SK-N-SH (cell line): ENCODE measurements at regions of chr19 and their contacts with region 1.

Region 1: GRCh38 chr19:46392243-46392801 is 21.0 kb downstream of the CCDC8 start:
- DNase-seq: no peak
- H3K4me3 ChIP-seq: no peak overlapping the region
- H3K27ac ChIP-seq: no peak overlapping the region
- H3K4me1 ChIP-seq: no peaks in the 10 kb centered on the region
- H3K27me3 ChIP-seq: no peaks in the 10 kb centered on the region
- CTCF ChIP-seq: no peak
- EP300 ChIP-seq: no peak
- RAD21 ChIP-seq: no peak

Region 2: GRCh38 chr19:46355234-46356148 is 36.8 kb before region 1 on chr19:
- CTCF ChIA-PET with region 1: interaction called, 11 read pairs
- POLR2A ChIA-PET with region 1: no interaction called
- DNase-seq: no peak
- H3K4me3 ChIP-seq: no peak overlapping the region
- H3K27ac ChIP-seq: no peak overlapping the region
- H3K4me1 ChIP-seq: peaks cover 15 to 21% of the 10 kb centered on the region in 2 experiments; a peak in 2 of 4 replicates
- H3K27me3 ChIP-seq: no peaks in the 10 kb centered on the region
- CTCF ChIP-seq: no peak
- EP300 ChIP-seq: no peak
- RAD21 ChIP-seq: no peak

Region 3: DNA sequence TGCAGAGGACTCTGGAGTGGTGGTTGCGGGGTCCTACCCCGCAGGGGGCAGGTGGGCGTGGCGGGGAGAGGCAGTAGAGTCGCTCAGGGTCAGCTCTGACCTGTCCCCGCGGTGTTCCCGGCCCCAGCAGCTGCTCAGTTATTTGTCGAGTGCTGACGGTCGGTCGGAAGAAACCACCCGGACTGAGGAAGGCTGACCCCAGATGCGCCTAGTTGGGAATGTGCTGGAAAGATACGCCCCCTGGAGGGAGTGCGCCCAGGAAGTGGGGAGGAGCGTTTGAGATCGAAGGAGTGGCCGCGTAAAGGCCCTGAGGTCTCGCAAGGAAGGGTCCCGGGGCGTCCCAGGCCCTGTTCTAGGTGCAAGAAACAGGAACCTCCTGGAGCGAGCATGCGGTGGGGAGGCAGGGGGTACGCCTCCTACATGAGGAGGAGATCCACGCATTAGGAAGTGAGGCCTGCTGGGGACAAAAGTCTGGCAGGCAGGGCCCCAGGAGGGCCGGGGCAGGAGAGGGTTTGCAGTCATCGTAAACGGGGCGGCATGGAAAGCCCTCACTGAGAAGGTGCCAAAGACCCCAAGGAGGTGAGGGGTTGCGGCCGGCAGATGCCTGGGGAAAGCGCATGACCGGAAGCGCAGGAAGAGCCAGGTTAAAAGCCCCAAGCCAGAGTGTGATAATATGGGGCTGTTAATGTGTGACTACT is 11.9 kb after region 1 on chr19:
- CTCF ChIA-PET with region 1: interaction called, 44 read pairs
- POLR2A ChIA-PET with region 1: no interaction called
- DNase-seq: no peak
- H3K4me3 ChIP-seq: no peak overlapping the region
- H3K27ac ChIP-seq: no peak overlapping the region
- H3K4me1 ChIP-seq: no peaks in the 10 kb centered on the region
- H3K27me3 ChIP-seq: no peaks in the 10 kb centered on the region
- CTCF ChIP-seq: no peak
- EP300 ChIP-seq: no peak
- RAD21 ChIP-seq: no peak

Region 4: GRCh38 chr19:46463516-46463915 is 71.2 kb after region 1 on chr19:
- CTCF ChIA-PET with region 1: interaction called, 17 read pairs
- POLR2A ChIA-PET with region 1: no interaction called
- DNase-seq: no peak
- H3K4me3 ChIP-seq: no peak overlapping the region
- H3K27ac ChIP-seq: no peak overlapping the region
- H3K4me1 ChIP-seq: peaks cover 0 to 11% of the 10 kb centered on the region in 2 experiments; a peak in 2 of 4 replicates
- H3K27me3 ChIP-seq: no peaks in the 10 kb centered on the region
- CTCF ChIP-seq: no peak
- EP300 ChIP-seq: no peak
- RAD21 ChIP-seq: no peak

Region 5: DNA sequence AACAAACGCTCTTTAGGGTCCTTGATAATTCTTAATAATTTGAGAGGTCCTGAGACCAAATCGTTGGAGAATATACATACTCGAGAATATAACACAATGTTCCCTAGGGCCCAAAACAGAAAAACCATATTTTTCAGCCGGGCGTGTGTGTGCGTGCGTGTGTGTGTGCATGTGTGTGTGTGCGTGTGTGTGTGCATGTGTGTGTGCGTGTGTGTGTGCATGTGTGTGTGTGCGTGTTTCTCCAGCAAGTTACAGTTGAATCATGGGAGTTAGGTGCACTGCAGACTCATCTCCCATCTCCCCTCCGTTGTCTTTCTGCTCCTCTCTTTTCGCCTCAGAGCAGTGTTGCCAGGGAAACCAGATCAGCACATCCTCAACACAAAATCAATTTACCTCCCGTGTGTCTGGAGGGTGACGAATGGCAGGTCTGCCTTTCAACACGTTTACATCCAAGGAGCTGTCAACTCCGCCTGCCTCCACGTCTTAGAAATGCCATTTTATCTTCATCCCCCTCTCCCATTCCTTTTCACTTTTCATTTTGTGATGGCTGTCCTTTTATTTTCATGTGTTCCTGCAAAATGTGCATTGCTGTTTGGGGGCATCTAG is 111.6 kb after region 1 on chr19:
- CTCF ChIA-PET with region 1: interaction called, 10 read pairs
- POLR2A ChIA-PET with region 1: no interaction called
- DNase-seq: peak; percentile 74
- H3K4me3 ChIP-seq: no peak overlapping the region
- H3K27ac ChIP-seq: no peak overlapping the region
- H3K4me1 ChIP-seq: peaks cover 0 to 4% of the 10 kb centered on the region in 2 experiments; a peak in 1 of 4 replicates
- H3K27me3 ChIP-seq: no peaks in the 10 kb centered on the region
- CTCF ChIP-seq: no peak
- EP300 ChIP-seq: no peak
- RAD21 ChIP-seq: no peak

Region 6: GRCh38 chr19:46520616-46521015 is 128.3 kb after region 1 on chr19:
- CTCF ChIA-PET with region 1: interaction called, 134 read pairs
- POLR2A ChIA-PET with region 1: no interaction called
- DNase-seq: no peak
- H3K4me3 ChIP-seq: no peak overlapping the region
- H3K27ac ChIP-seq: no peak overlapping the region
- H3K4me1 ChIP-seq: no peaks in the 10 kb centered on the region
- H3K27me3 ChIP-seq: no peaks in the 10 kb centered on the region; the same call in 1 of the 2 replicates
- CTCF ChIP-seq: no peak
- EP300 ChIP-seq: no peak
- RAD21 ChIP-seq: no peak

Region 7: GRCh38 chr19:46721645-46722371 is 329.5 kb after region 1 on chr19:
- CTCF ChIA-PET with region 1: no interaction called
- POLR2A ChIA-PET with region 1: no interaction called
- DNase-seq: peak; percentile 76
- H3K4me3 ChIP-seq: no peak overlapping the region
- H3K27ac ChIP-seq: no peak overlapping the region
- H3K4me1 ChIP-seq: peaks cover 0 to 5% of the 10 kb centered on the region in 2 experiments; a peak in 1 of 4 replicates
- H3K27me3 ChIP-seq: no peaks in the 10 kb centered on the region
- CTCF ChIP-seq: peak; percentile 41
- EP300 ChIP-seq: no peak
- RAD21 ChIP-seq: no peak